ENCODE measurements at regions of chrX and their contacts with region 1.

Region 1: GRCh38 chrX:41634284-41634683 is 54.5 kb upstream of the GPR34 start:
- DNase-seq: no peak
- H3K27ac ChIP-seq: no peak overlapping the region
- CTCF ChIP-seq: no peak

Region 2: GRCh38 chrX:41655631-41656030 is 21.3 kb after region 1 on chrX:
- CTCF ChIA-PET with region 1: interaction called, 6 read pairs
- POLR2A ChIA-PET with region 1: interaction called, 10 read pairs
- DNase-seq: peak; percentile 3
- H3K27ac ChIP-seq: no peak overlapping the region
- CTCF ChIP-seq: no peak